OCI-LY7 (cell line): ENCODE measurements at regions of chr9 and their contacts with region 1.

Region 1: GRCh38 chr9:117936185-117937130 is 232.3 kb downstream of the TLR4 start:
- DNase-seq: peak; percentile 84
- H3K4me3 ChIP-seq: peak overlapping the region; percentile 36
- H3K27ac ChIP-seq: peak overlapping the region; percentile 82
- H3K4me1 ChIP-seq: peaks cover 21% of the 10 kb centered on the region
- CTCF ChIP-seq: no peak

Region 2: DNA sequence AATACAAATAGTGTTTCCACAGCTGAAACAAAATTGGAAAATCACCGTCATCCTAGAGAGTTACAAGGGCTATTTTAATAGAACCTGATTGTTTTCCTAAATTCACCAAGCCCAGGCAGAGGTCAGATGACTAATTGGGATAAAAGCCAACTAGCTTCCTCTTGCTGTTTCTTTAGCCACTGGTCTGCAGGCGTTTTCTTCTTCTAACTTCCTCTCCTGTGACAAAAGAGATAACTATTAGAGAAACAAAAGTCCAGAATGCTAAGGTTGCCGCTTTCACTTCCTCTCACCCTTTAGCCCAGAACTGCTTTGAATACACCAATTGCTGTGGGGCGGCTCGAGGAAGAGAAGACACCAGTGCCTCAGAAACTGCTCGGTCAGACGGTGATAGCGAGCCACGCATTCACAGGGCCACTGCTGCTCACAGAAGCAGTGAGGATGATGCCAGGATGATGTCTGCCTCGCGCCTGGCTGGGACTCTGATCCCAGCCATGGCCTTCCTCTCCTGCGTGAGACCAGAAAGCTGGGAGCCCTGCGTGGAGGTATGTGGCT is 232.4 kb before region 1 on chr9 and contains the start of gene TLR4:
- CTCF ChIA-PET with region 1: no interaction called
- POLR2A ChIA-PET with region 1: interaction called, 3 read pairs
- intact Hi-C with region 1: loop called (anchors 5 kb)
- DNase-seq: peak; percentile 90
- H3K4me3 ChIP-seq: peak within 1 kb of the TSS; percentile 74
- H3K27ac ChIP-seq: peak within 1 kb of the TSS; percentile 82
- H3K4me1 ChIP-seq: peaks cover 37% of the 10 kb centered on the region
- CTCF ChIP-seq: no peak
- total RNA-seq, gene TLR4: 4.0 and 4.4 TPM in 2 replicates

Region 3: DNA sequence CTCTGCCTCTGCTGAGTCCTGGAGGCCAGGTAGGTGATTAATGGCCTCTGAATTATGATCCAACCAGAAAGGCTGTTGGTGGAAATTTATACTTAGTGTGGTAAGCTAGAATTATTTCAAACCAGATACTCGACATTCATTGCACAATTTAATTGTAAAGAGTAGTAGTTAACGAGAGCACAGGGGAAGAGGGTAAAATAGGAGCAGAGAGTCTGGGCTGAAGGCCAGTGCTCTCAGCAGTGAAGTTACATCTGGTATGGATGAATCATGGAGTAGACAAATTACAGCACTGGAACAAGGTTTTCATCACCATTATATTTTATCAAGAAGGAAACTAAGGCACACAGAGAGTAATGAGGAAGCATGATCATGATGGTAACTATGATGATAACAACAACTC is 139.8 kb before region 1 on chr9:
- CTCF ChIA-PET with region 1: no interaction called
- POLR2A ChIA-PET with region 1: no interaction called
- intact Hi-C with region 1: no loop called
- DNase-seq: no peak
- H3K4me3 ChIP-seq: no peak overlapping the region
- H3K27ac ChIP-seq: no peak overlapping the region
- H3K4me1 ChIP-seq: no peaks in the 10 kb centered on the region
- CTCF ChIP-seq: no peak

Region 4: GRCh38 chr9:117987945-117988344 is 51.5 kb after region 1 on chr9:
- CTCF ChIA-PET with region 1: no interaction called
- POLR2A ChIA-PET with region 1: interaction called, 14 read pairs
- intact Hi-C with region 1: no loop called
- DNase-seq: no peak
- H3K4me3 ChIP-seq: no peak overlapping the region
- H3K27ac ChIP-seq: no peak overlapping the region
- H3K4me1 ChIP-seq: no peaks in the 10 kb centered on the region
- CTCF ChIP-seq: no peak

Region 5: DNA sequence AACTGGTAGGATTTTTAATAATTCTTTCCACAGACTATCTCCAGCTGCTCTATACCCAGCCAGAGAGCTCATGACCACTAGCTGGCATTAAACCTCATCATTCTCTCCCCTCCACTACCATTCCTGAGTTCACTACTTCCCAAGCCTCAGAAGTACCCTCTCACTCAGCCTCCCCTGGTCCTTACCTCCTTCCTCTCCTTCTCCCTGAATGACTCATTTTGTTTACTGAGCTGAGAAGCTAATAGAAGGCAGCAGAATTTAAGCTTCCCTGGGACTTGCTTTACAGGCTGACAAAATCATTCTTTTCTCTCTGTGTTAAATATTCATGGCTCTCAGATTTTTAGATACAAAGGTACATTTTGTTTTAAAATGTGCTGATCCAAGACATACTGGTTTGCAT is 73.2 kb after region 1 on chr9:
- CTCF ChIA-PET with region 1: no interaction called
- POLR2A ChIA-PET with region 1: no interaction called
- intact Hi-C with region 1: no loop called
- DNase-seq: no peak
- H3K4me3 ChIP-seq: no peak overlapping the region
- H3K27ac ChIP-seq: no peak overlapping the region
- H3K4me1 ChIP-seq: no peaks in the 10 kb centered on the region
- CTCF ChIP-seq: no peak